ENCODE measurements at regions of chr1 and their contacts with region 1.

Region 1: GRCh38 chr1:33295450-33296081 is 25.3 kb downstream of the A3GALT2 start:
- DNase-seq: peak; percentile 86 to 95
- ATAC-seq: peak; percentile 93
- H3K4me3 ChIP-seq: no peak overlapping the region
- H3K27ac ChIP-seq: no peak overlapping the region
- H3K4me1 ChIP-seq: no peaks in the 10 kb centered on the region
- H3K27me3 ChIP-seq: no peaks in the 10 kb centered on the region

Region 2: GRCh38 chr1:33127001-33127791 is 168.4 kb before region 1 on chr1:
- intact Hi-C with region 1: loop called in 1 of 2 experiments (anchors 10 kb)
- DNase-seq: peak; percentile 99
- ATAC-seq: peak; percentile 98
- H3K4me3 ChIP-seq: peak overlapping the region; percentile 56 to 58
- H3K27ac ChIP-seq: peak overlapping the region; percentile 49 to 85
- H3K4me1 ChIP-seq: no peaks in the 10 kb centered on the region
- H3K27me3 ChIP-seq: no peaks in the 10 kb centered on the region

Region 3: DNA sequence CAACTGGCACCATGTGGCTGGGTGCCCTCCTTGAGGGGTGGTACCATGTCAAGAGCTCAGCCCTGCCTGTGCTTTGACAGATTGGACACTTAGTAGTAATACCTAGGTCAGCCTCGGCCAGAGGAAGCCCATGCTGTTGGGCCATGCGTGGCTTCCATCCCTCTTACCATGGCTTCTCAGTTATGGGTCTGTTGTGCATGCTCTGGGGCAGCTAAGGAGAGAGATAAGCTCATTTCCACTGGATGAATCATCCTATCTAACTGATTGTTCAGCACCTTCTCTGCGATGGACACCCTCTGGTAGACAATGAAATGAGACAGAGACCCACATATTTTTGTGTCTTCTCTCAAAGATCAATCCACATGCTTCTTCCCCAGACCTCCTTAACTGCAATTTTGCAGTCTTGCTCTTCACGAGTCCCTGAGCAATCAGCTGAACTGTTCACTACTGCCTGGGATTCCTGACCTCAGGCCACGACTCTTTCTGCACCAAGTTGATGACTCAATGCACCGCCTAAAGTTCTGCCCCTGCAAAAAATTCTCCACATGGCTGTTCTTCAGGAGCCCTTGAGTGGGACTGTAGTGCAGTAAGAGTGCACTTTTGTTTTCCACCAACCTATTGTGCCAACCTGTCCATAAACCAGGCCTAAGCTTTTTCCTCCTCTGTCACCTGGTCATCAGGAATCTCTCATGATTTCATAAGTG is 106.8 kb before region 1 on chr1:
- intact Hi-C with region 1: no loop called
- DNase-seq: no peak
- ATAC-seq: no peak
- H3K4me3 ChIP-seq: no peak overlapping the region
- H3K27ac ChIP-seq: no peak overlapping the region
- H3K4me1 ChIP-seq: no peaks in the 10 kb centered on the region
- H3K27me3 ChIP-seq: peaks cover 0 to 2% of the 10 kb centered on the region in 2 donors

Region 4: DNA sequence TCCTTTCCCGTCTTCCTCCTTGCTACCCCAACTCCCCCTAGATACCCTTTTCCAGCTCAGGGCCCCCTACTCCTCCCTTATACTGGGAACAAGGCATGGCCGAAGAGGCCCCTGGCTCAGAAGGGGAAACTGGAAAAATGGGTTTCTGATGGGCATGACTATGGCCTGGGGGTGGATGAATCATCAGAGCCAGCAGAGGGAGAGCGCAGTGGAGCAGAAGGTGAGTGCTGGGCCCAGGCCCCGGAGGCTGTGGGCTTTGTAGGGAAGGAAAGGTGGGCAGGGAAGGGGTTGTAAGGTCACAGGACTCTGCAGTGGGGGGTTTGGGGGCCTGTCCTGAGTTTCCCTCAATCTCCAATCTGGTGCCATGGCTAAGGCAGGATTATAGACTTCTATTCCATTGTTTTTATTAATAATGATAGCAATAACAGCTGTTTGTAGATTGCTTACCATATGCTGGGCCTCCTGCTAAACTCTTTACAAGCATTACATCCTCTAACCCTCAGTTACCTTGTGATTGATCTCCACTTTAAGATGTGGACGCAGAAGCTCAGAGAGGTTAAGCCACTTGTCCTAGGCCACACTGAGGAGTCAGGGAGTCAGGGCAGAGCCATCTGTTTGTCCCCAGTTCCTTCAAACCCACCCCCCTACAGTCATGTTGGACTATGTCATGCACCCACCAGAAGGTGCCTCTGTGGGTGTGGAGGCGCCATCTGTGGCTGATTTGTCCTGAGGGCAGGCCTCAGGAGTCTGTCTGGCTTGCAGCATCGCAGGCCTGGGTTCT is 75.5 kb before region 1 on chr1:
- intact Hi-C with region 1: loop called in 1 of 2 experiments (anchors 5 kb)
- DNase-seq: no peak
- ATAC-seq: no peak
- H3K4me3 ChIP-seq: no peak overlapping the region
- H3K27ac ChIP-seq: no peak overlapping the region
- H3K4me1 ChIP-seq: no peaks in the 10 kb centered on the region
- H3K27me3 ChIP-seq: no peaks in the 10 kb centered on the region

Region 5: GRCh38 chr1:33338440-33339211 is 43.1 kb after region 1 on chr1:
- intact Hi-C with region 1: loop called in 1 of 2 experiments (anchors 5 kb)
- DNase-seq: peak in 1 of 2 donors; percentile 62
- ATAC-seq: peak; percentile 73
- H3K4me3 ChIP-seq: peak overlapping the region in 1 of 2 donors; percentile 8
- H3K27ac ChIP-seq: peak overlapping the region; percentile 78 to 81
- H3K4me1 ChIP-seq: peaks cover 14 to 15% of the 10 kb centered on the region in 2 donors
- H3K27me3 ChIP-seq: no peaks in the 10 kb centered on the region

Region 6: DNA sequence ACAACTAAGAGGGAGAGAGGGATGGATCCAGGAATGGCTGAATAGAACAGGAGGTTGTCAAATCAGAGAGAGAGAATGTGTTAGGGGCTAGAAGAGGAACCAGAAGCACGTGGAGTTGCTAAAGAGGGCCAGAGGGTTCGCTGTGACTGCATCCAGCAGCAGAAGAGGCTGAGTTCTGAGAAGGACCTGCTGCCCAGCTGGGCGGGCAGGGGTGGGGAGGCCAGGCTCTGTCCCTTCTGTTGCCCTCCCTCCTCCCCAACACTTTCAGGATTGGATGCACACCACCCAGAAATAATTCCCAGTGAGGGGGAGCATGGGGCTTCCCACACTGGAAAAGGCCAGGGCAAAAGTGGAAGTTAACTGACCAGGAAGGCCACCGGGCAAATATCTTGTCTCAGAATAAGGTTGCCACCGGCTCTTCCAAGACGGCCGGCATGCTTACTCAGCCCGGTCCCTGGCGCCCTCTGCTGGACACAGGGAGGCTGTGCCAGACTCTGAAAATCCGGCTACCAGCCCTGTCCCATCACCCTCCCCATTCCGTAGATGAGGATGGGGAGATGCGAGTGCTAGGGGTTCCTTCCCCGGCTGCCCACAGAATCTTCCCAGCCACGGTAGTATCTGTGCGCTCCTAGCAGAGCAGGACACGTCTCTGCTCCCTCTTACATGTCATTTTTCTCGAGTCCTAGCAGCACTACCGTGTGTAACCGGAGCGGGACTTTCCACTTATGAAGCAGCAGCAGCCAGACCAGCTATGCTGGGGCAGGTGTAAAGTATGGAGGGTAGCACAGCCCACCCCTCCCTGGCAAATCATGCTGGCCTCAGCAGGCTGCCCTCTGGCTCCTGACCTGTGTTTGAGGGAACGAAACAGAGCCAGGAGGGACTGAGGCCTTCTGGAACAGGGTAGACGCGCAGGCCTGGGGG is 72.2 kb after region 1 on chr1:
- intact Hi-C with region 1: loop called (anchors 1 to 2 kb)
- DNase-seq: peak; percentile 91 to 97
- ATAC-seq: peak; percentile 89
- H3K4me3 ChIP-seq: no peak overlapping the region
- H3K27ac ChIP-seq: peak overlapping the region in 1 of 2 donors; percentile 65
- H3K4me1 ChIP-seq: peaks cover 2 to 3% of the 10 kb centered on the region in 2 donors
- H3K27me3 ChIP-seq: no peaks in the 10 kb centered on the region

Region 7: GRCh38 chr1:33472349-33472980 is 176.9 kb after region 1 on chr1 and contains the start of gene ZSCAN20:
- intact Hi-C with region 1: loop called (anchors 2 kb)
- DNase-seq: peak; percentile 98 to 99
- ATAC-seq: peak; percentile 94
- H3K4me3 ChIP-seq: peak within 1 kb of the TSS; percentile 5 to 55
- H3K27ac ChIP-seq: peak within 1 kb of the TSS; percentile 47 to 74
- H3K4me1 ChIP-seq: peaks cover 5 to 10% of the 10 kb centered on the region in 2 donors
- H3K27me3 ChIP-seq: no peaks in the 10 kb centered on the region
- total RNA-seq, gene ZSCAN20: 5.9 to 8.0 TPM

Region 8: GRCh38 chr1:33616773-33617172 is 321.2 kb after region 1 on chr1:
- intact Hi-C with region 1: loop called (anchors 10 kb)
- DNase-seq: no peak
- ATAC-seq: no peak
- H3K4me3 ChIP-seq: no peak overlapping the region
- H3K27ac ChIP-seq: no peak overlapping the region
- H3K4me1 ChIP-seq: no peaks in the 10 kb centered on the region
- H3K27me3 ChIP-seq: no peaks in the 10 kb centered on the region

Measured in aorta (tissue), 5 donors.